MCF 10A (cell line): ENCODE measurements at regions of chr10 and their contacts with region 1.

Region 1: GRCh38 chr10:119650692-119651513 is at the start of gene BAG3:
- DNase-seq: peak; percentile 96
- H3K4me3 Mint-ChIP-seq: peak within 1 kb of the TSS; percentile 94
- H3K27ac Mint-ChIP-seq: peak within 1 kb of the TSS; percentile 94
- H3K4me1 Mint-ChIP-seq: peaks cover 26% of the 10 kb centered on the region
- H3K27me3 Mint-ChIP-seq: no peaks in the 10 kb centered on the region
- CTCF ChIP-seq: no peak
- total RNA-seq, gene BAG3: 53.7 and 55.2 TPM in 2 replicates

Region 2: DNA sequence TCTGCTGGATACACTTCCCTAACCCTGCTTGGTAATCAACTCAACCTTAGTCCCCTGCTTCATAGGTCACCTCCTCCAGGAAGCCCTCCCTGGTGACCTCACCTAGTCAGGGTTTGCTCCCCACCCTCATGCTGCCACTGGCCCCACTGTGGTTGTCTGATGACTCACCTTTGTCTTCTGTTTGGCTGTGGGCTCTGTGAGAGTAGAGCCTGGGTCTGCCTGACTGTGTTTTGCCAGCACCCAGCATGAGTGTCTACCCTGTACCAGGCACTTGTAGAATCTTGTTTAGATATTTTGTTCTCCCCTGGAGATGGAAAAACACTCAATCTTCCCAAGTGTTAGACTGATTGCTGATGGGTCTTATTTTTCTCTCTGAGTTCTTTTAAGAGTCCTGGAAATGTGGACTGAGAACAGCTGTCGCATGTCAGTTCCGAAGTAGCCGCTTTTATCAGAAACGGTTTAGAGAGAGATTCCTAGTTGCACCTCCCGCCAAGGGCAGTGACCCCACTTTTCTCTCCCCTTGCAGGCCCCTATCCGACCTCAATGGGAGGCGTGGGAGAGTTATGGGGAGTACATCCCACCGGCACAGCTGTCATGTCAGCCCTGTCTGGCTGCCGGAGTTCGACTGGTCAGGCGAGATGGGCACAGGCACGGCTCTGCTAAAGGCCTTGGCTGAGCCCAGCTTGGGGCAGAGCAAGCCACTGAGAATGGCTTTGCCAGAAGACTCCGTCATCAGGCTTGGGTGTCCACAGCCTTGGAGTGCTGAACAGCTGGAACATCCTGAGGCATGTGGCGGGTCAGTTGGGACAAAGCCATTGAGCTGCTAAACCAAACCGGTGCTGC is 309.2 kb before region 1 on chr10:
- CTCF ChIA-PET with region 1: no interaction called
- POLR2A ChIA-PET with region 1: no interaction called
- intact Hi-C with region 1: no loop called
- DNase-seq: peak; percentile 35
- H3K4me3 Mint-ChIP-seq: no peak overlapping the region
- H3K27ac Mint-ChIP-seq: no peak overlapping the region
- H3K4me1 Mint-ChIP-seq: peaks cover 5% of the 10 kb centered on the region
- H3K27me3 Mint-ChIP-seq: no peaks in the 10 kb centered on the region
- CTCF ChIP-seq: no peak

Region 3: DNA sequence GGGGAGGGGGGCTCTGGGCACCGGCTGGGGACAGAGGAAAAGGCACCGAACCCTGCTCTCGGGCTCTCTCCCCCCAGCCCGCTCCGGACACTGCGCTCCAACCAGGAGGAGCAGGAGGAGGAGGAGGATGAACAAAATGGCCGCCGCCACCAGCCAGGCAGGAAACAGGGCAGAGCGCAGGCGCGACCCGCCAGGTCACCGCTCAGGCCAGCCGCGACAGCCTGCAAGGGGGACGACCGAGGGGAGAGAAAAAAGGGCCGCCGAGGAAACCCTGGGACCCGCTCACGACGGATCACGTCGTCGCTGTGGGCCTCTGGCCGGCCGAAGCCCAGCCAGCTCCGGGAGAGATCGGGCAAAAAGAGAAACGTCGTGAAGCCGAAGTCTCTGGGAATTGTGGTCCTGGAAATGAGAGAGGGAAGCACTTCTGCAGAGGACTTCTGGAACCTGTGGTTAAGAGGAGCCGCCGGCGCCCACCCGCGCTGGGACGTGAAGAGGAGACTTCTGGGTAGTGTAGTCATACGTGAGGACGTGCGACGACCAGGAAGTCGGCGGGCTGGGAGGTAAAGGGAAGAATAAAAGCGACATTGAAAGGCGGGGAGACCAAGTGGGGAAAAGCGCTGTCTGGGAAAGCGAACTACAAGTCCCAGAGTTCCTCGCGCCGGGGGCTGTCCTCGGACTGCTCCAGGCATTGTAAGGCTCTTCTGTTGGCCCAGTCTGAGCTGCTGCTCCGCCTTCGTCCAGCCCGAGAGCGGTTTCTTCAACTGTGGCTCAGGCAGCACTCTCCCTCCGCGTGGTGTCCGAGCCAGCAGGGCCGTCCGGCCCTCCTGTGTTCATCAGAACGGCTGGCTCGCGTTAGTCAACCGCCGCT is 54.1 kb before region 1 on chr10 and contains the start of gene TIAL1:
- CTCF ChIA-PET with region 1: no interaction called
- POLR2A ChIA-PET with region 1: interaction called, 114 read pairs
- intact Hi-C with region 1: loop called (anchors 2 kb)
- DNase-seq: peak; percentile 99
- H3K4me3 Mint-ChIP-seq: peak within 1 kb of the TSS; percentile 77
- H3K27ac Mint-ChIP-seq: peak within 1 kb of the TSS; percentile 87
- H3K4me1 Mint-ChIP-seq: peaks cover 22% of the 10 kb centered on the region
- H3K27me3 Mint-ChIP-seq: no peaks in the 10 kb centered on the region
- CTCF ChIP-seq: no peak
- total RNA-seq, gene TIAL1: 117 and 149 TPM in 2 replicates

Region 4: GRCh38 chr10:119667562-119668328 is 16.8 kb after region 1 on chr10:
- CTCF ChIA-PET with region 1: interaction called, 6 read pairs
- POLR2A ChIA-PET with region 1: interaction called, 752 read pairs
- intact Hi-C with region 1: loop called (anchors 1 kb)
- DNase-seq: peak; percentile 98
- H3K4me3 Mint-ChIP-seq: peak overlapping the region; percentile 59
- H3K27ac Mint-ChIP-seq: peak overlapping the region; percentile 93
- H3K4me1 Mint-ChIP-seq: peaks cover 54% of the 10 kb centered on the region
- H3K27me3 Mint-ChIP-seq: no peaks in the 10 kb centered on the region
- CTCF ChIP-seq: no peak

Region 5: GRCh38 chr10:119737827-119738226 is 86.9 kb after region 1 on chr10:
- CTCF ChIA-PET with region 1: interaction called, 3 read pairs
- POLR2A ChIA-PET with region 1: interaction called, 27 read pairs
- intact Hi-C with region 1: no loop called
- DNase-seq: peak; percentile 81
- H3K4me3 Mint-ChIP-seq: peak overlapping the region; percentile 68
- H3K27ac Mint-ChIP-seq: peak overlapping the region; percentile 86
- H3K4me1 Mint-ChIP-seq: peaks cover 18% of the 10 kb centered on the region
- H3K27me3 Mint-ChIP-seq: no peaks in the 10 kb centered on the region
- CTCF ChIP-seq: no peak

Region 6: DNA sequence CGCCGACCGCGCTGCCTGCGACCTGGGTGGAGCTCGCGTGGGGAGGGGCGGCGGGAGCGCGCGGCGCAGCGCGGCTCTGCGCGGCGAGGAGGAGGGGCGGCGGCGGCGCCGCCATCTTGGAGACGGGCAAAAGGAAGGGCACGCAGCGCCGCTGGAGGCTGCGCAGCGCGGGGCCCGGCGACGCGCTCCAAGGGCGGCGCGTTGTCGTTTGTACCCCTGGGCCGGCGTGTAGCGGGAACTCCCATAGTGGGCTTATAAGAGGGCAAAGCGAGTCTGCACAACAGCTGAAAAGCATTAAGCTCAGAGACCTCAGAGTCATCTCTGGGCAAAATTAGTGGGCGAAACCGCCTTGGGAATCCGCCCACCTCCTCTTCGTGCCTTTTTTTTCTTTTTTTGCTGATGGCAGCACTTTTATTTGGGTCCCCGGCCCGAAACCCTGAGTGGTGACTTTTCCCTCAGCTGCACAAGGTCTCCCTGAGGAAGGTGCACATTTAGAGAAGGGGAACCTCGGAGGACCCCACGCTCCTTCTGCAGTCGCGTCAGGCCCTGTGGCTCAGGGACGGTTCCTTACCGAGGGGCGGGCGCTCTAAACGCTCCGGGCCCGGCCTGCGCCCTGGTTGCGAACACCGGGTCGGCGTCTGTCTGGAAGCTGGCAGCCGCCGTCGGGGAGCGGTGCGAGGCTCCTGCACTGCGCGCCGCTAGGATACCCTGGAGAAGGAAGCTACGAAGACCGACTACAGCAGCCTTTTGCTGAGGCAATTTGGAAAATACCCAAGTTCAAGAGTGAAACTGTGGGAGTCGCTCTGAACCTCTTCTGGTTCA is 222.2 kb after region 1 on chr10:
- CTCF ChIA-PET with region 1: interaction called, 3 read pairs
- POLR2A ChIA-PET with region 1: interaction called, 30 read pairs
- intact Hi-C with region 1: no loop called
- DNase-seq: peak; percentile 77
- H3K4me3 Mint-ChIP-seq: peak overlapping the region; percentile 87
- H3K27ac Mint-ChIP-seq: peak overlapping the region; percentile 59
- H3K4me1 Mint-ChIP-seq: peaks cover 28% of the 10 kb centered on the region
- H3K27me3 Mint-ChIP-seq: no peaks in the 10 kb centered on the region
- CTCF ChIP-seq: no peak